ENCODE measurements at regions of chr13 and their contacts with region 1.

Region 1: DNA sequence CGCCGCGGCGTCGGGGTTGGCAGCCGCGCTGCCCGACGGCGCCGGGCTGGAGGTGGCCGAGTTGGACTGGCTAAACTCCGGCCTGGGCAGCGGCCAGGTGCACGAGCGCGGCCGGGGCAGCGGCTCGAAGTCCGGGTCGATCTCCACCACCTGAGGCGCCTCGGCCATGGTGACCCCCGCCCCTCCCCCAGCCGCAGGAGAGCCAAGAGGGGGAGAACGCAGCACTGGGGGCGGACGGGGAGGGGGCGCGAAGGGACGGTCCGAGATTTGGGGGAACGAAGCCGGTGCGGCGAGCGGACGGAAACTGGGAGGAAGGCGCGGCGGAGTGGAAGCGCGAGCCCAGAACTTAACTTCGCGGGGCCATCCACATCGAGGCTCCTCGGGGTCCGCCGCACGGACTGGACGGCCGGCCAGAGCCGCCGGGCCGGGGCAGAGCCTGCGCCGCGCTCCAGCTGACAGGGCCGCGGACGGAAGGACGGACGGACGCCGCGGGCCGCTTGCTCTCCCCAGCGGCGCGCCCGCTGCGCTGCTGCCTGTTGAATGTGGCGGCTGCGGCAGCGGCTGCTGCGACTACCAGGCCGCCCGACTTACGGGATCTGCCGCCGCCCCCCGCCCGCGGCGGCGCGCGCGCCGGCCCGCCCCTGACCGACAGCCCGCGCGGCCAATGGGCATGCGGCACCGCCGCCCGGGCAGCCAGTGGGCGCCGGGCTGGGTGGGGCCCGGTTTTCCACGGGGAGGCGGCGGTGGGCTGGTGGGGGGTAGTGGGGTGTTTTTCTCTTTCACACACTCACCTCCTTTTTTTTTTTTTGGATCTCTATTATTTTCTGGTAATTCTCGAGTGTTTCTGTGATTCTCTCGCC is at the start of gene FOXO1:
- DNase-seq: peak; percentile 86 to 94 (median 89)
- H3K4me3 ChIP-seq: peak within 1 kb of the TSS; percentile 75 to 94 (median 88)
- H3K27ac ChIP-seq: peak within 1 kb of the TSS; percentile 83 to 98 (median 97)
- H3K4me1 ChIP-seq: peaks cover 22 to 34% of the 10 kb centered on the region in 2 donors
- H3K27me3 ChIP-seq: no peaks in the 10 kb centered on the region
- CTCF ChIP-seq: peak in 1 of 6 experiments; percentile 13
- POLR2A ChIP-seq: peak; percentile 94 to 98
- total RNA-seq, gene FOXO1: 17.2 to 35.4 (median 22.5) TPM

Region 2: GRCh38 chr13:40578055-40578454 is 88.2 kb before region 1 on chr13:
- intact Hi-C with region 1: loop called in 1 of 2 experiments (anchors 10 kb)
- DNase-seq: no peak
- H3K4me3 ChIP-seq: no peak overlapping the region
- H3K27ac ChIP-seq: no peak overlapping the region
- H3K4me1 ChIP-seq: peaks cover 20 to 52% of the 10 kb centered on the region in 2 donors
- H3K27me3 ChIP-seq: no peaks in the 10 kb centered on the region
- CTCF ChIP-seq: no peak
- POLR2A ChIP-seq: no peak

Region 3: GRCh38 chr13:40613192-40613818 is 53.0 kb before region 1 on chr13:
- intact Hi-C with region 1: loop called in 1 of 2 experiments (anchors 10 kb)
- DNase-seq: peak in 4 of 7 donors; percentile 29 to 69 (median 34)
- H3K4me3 ChIP-seq: no peak overlapping the region
- H3K27ac ChIP-seq: peak overlapping the region in 3 of 5 donors; percentile 19 to 72 (median 67)
- H3K4me1 ChIP-seq: peaks cover 43 to 82% of the 10 kb centered on the region in 2 donors
- H3K27me3 ChIP-seq: no peaks in the 10 kb centered on the region
- CTCF ChIP-seq: no peak
- POLR2A ChIP-seq: no peak

Region 4: GRCh38 chr13:40801255-40802217 is 135.3 kb after region 1 on chr13:
- intact Hi-C with region 1: no loop called
- DNase-seq: no peak
- H3K4me3 ChIP-seq: no peak overlapping the region
- H3K27ac ChIP-seq: no peak overlapping the region
- H3K4me1 ChIP-seq: no peaks in the 10 kb centered on the region
- H3K27me3 ChIP-seq: no peaks in the 10 kb centered on the region
- CTCF ChIP-seq: no peak
- POLR2A ChIP-seq: no peak

Region 5: DNA sequence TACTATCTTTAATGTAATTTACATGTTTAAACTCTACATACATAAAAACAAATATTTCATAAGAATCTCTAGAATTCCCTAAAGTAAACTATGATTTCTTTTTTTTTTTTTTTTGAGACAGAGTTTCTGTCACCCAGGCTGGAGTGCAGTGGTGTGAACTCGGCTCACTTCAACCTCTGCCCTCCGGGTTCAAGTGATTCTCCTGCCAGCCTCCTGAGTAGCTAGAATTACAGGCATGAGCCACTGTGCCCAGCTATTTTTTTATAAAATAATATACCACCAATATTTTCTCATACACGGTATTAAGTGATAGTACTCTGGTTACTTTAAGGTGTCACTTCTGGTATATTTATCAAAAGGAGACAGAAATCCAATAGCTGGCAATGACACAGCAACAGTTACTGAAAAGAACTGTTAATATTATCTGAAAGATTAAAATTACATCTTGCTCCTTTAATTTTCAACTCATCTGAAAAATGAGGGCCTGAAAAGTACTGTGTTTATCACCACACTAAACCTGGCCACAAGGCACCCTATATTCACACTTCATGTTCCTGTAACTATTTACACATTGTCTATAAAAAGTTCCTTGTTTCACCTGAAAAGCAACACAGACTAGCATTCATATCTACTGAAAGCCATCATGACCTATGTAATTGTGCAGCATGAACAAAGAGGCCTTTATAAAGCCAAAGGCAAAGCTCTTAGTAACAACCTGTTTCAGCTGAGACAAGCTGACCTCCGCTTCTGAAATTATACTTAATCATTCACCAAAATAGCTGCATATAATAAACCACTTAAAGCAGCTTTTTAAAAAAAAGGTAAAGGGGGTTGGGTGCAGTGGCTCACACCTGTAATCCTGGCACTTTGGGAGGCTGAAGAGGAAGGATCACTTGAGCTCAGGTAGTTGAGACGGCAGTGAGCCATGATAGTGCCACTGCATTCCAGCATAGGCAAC is 229.2 kb after region 1 on chr13:
- intact Hi-C with region 1: no loop called
- DNase-seq: no peak
- H3K4me3 ChIP-seq: no peak overlapping the region
- H3K27ac ChIP-seq: no peak overlapping the region
- H3K4me1 ChIP-seq: no peaks in the 10 kb centered on the region
- H3K27me3 ChIP-seq: no peaks in the 10 kb centered on the region
- CTCF ChIP-seq: no peak
- POLR2A ChIP-seq: no peak

Region 6: DNA sequence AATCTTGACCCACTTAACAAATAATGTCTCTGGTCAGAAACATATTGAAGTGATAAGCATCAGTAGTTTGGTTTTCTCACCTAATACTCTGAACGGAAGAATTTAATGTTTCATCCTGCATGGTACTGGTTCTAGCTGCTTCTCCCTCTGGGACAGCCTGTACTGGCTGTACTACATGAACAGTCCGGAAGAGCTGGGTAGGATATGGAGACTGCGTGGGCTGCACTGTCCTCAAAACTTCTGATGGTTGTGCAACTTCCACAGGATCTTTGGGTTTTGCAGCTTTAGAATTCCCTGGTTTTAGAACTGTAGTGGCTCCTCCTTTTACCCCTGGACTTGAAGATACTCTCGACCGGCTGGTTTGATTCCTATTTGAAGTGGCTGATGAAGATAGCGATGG is 274.6 kb after region 1 on chr13:
- intact Hi-C with region 1: no loop called
- DNase-seq: no peak
- H3K4me3 ChIP-seq: no peak overlapping the region
- H3K27ac ChIP-seq: peak overlapping the region in 1 of 5 donors; percentile 18
- H3K4me1 ChIP-seq: peaks cover 11 to 16% of the 10 kb centered on the region in 2 donors
- H3K27me3 ChIP-seq: no peaks in the 10 kb centered on the region
- CTCF ChIP-seq: no peak
- POLR2A ChIP-seq: no peak

Measured in adrenal gland (tissue), 19 donors.